ENCODE measurements at regions of chr2 and their contacts with region 1.

Region 1: GRCh38 chr2:199186301-199186751 is 271.4 kb downstream of the SATB2 start:
- DNase-seq: no peak
- H3K4me3 ChIP-seq: no peak overlapping the region
- H3K27ac ChIP-seq: no peak overlapping the region
- H3K4me1 ChIP-seq: no peaks in the 10 kb centered on the region
- H3K27me3 ChIP-seq: no peaks in the 10 kb centered on the region
- CTCF ChIP-seq: no peak

Region 2: DNA sequence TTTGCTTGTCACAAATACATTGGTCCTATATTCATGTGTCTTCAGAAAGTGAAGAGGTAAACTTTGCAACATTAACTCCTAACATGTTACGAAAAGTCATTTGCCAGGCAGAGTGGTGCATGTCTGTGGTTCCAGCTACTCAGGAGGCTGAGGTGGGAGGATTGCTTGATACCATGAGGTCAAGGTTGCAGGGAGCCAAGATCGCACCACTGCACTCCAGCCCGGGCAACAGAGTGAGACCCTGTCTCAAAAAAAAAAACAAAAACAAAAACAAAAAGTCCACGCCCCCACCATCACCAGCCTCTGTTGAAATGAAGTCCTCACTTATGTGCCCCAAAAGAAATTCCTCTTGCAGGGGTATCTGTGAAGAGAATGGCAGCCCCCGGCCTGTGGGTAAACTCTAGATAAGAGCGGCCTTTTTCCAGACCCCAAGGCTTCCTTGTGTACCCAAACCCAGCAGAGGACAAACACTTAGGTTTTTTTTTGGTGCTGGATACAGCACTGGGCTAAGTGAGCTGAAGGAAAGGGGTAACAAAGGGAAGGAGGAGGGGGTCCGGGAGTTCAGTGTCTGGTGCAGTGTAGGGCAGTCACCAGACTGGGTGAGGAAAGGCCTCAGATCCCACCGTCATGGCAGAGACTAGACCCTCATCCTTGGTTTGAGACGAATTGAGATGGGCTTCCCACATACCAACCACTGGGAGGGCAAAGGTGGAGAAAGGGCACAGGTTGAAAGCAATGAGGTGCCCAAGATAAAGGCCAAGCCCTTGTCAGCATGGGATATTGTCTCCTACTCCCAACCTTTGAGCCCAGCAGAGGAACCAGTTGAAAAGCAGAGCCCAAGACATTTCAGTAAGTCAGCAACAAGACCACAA is 1705.9 kb before region 1 on chr2:
- CTCF ChIA-PET with region 1: no interaction called
- POLR2A ChIA-PET with region 1: no interaction called
- intact Hi-C with region 1: no loop called
- DNase-seq: no peak
- H3K4me3 ChIP-seq: no peak overlapping the region
- H3K27ac ChIP-seq: no peak overlapping the region
- H3K4me1 ChIP-seq: no peaks in the 10 kb centered on the region
- H3K27me3 ChIP-seq: no peaks in the 10 kb centered on the region
- CTCF ChIP-seq: no peak

Region 3: GRCh38 chr2:199206536-199206935 is 20.2 kb after region 1 on chr2:
- CTCF ChIA-PET with region 1: no interaction called
- POLR2A ChIA-PET with region 1: no interaction called
- intact Hi-C with region 1: loop called (anchors 1 kb)
- DNase-seq: no peak
- H3K4me3 ChIP-seq: no peak overlapping the region
- H3K27ac ChIP-seq: no peak overlapping the region
- H3K4me1 ChIP-seq: no peaks in the 10 kb centered on the region
- H3K27me3 ChIP-seq: no peaks in the 10 kb centered on the region
- CTCF ChIP-seq: no peak

Measured in PC-9 (cell line).